HepG2 (cell line): ENCODE measurements at regions of chr16 and their contacts with region 1.

Region 1: DNA sequence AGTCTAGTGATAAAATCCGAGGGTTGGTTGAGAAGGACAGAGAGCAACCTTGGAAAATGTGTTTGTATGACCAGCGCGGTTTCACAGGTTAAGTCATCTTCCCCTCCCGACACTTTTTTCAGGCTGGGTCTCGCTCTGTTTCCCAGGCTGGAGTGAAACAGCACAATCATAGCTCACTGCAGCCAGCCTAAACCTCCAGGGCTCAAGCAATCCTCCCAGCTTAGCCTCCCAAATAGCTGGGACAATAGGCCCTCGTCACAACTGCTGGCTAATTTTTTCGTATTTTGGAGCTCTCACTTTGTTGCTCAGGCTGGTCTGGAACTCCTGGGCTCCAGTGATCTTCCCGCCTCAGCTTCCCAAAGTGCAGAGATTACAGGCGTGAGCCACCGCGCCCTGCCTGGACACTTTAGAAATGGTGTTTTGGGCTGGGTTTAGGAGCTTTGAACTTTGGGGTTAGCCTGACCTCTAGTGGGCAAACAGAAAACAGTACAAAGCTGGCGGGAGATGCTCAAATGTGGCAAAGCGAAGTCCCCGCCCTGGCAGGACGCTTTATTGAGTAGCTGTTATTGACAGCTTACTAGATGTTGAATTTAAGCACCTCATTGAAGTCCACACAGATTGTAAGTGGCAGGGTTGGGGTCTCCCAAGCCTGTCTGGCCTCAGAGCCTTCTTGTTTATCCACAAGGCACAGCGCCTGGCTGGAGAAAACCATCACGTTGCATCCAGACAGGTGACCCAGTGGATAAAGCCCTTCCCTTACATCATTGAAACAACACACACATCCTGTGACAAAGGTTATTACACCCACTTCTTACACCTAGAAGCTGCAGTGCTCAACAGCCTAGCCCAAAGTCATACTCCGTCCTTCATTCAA is 34.7 kb upstream of the RBBP6 start:
- DNase-seq: peak; percentile 67
- ATAC-seq: peak; percentile 96
- H3K4me3 ChIP-seq: no peak overlapping the region
- H3K27ac ChIP-seq: no peak overlapping the region
- H3K4me1 ChIP-seq: peaks cover 4% of the 10 kb centered on the region; the same call in 1 of the 2 replicates
- H3K27me3 ChIP-seq: peaks cover 0 to 11% of the 10 kb centered on the region in 2 experiments; a peak in 1 of 5 replicates
- CTCF ChIP-seq: peak; percentile 92
- EP300 ChIP-seq: no peak
- POLR2A ChIP-seq: no peak
- RAD21 ChIP-seq: peak; percentile 85

Region 2: GRCh38 chr16:23803591-23804123 is 701.1 kb before region 1 on chr16:
- CTCF ChIA-PET with region 1: interaction called, 3 read pairs
- POLR2A ChIA-PET with region 1: no interaction called
- in situ Hi-C with region 1: loop called (anchors 10 kb)
- intact Hi-C with region 1: loop called (anchors 5 kb)
- DNase-seq: peak; percentile 43
- ATAC-seq: peak; percentile 96
- H3K4me3 ChIP-seq: no peak overlapping the region
- H3K27ac ChIP-seq: no peak overlapping the region
- H3K4me1 ChIP-seq: no peaks in the 10 kb centered on the region
- H3K27me3 ChIP-seq: 0 out of 5 replicates have a peak, but pooled peaks cover 0 to 4% of the 10 kb centered on the region in 2 experiments
- CTCF ChIP-seq: peak; percentile 76
- EP300 ChIP-seq: no peak
- POLR2A ChIP-seq: no peak
- RAD21 ChIP-seq: peak; percentile 47

Region 3: DNA sequence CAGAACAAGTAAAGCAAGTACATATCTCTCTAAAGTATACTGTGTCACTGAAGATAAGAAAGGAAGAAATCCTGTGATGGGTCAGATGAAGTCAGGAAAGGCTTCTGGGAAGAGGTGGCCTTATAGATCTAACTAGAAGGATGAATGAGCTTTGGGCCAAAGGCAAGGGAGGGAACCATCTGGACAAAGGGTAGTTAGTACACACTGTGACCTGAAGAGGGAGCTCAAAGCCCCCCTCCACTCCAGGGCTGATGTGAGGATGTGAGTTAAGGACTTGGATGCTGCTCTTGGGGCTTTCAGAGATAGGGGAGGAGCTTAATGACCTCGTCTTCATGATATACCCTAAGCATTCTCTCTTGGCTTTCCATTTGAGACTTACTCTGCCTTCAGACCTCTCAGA is 433.9 kb before region 1 on chr16:
- CTCF ChIA-PET with region 1: interaction called, 5 read pairs
- POLR2A ChIA-PET with region 1: no interaction called
- in situ Hi-C with region 1: no loop called
- intact Hi-C with region 1: loop called (anchors 1 kb)
- DNase-seq: peak; percentile 29
- ATAC-seq: peak; percentile 86
- H3K4me3 ChIP-seq: no peak overlapping the region
- H3K27ac ChIP-seq: no peak overlapping the region
- H3K4me1 ChIP-seq: no peaks in the 10 kb centered on the region
- H3K27me3 ChIP-seq: no peaks in the 10 kb centered on the region; a peak in 1 of 5 replicates
- CTCF ChIP-seq: peak; percentile 77
- EP300 ChIP-seq: no peak
- POLR2A ChIP-seq: no peak
- RAD21 ChIP-seq: peak; percentile 29; the same call in 1 of the 2 replicates

Region 4: DNA sequence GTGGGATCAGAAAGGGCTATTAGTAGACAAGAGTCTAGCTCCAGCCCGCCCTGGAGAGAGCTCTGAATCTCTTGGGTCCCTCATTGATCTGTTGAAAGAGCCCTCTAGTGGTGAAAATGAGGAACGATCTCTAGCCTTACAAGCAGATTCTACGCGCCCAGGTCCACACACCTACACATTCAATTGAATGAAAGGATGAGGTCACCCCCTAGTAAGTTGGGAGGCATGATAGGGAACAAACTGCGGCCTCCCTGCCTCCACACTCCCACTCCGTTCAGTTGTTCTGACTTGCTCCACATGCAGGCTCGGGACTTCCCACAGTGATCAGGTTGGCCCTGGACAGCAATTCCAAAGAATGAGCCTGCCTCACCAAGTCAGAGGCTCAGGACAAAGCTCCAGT is 251.5 kb before region 1 on chr16:
- CTCF ChIA-PET with region 1: no interaction called
- POLR2A ChIA-PET with region 1: no interaction called
- in situ Hi-C with region 1: no loop called
- intact Hi-C with region 1: loop called (anchors 5 kb)
- DNase-seq: peak; percentile 47
- ATAC-seq: peak; percentile 93
- H3K4me3 ChIP-seq: no peak overlapping the region
- H3K27ac ChIP-seq: no peak overlapping the region
- H3K4me1 ChIP-seq: no peaks in the 10 kb centered on the region
- H3K27me3 ChIP-seq: peaks cover 0 to 4% of the 10 kb centered on the region in 2 experiments; a peak in 1 of 5 replicates
- CTCF ChIP-seq: peak; percentile 79
- EP300 ChIP-seq: no peak
- POLR2A ChIP-seq: no peak
- RAD21 ChIP-seq: peak; percentile 48; the same call in 1 of the 2 replicates

Region 5: GRCh38 chr16:24382762-24383407 is 121.8 kb before region 1 on chr16:
- CTCF ChIA-PET with region 1: no interaction called
- POLR2A ChIA-PET with region 1: no interaction called
- in situ Hi-C with region 1: no loop called
- intact Hi-C with region 1: no loop called
- DNase-seq: no peak
- ATAC-seq: no peak
- H3K4me3 ChIP-seq: no peak overlapping the region
- H3K27ac ChIP-seq: no peak overlapping the region
- H3K4me1 ChIP-seq: peaks cover 6% of the 10 kb centered on the region; the same call in 1 of the 2 replicates
- H3K27me3 ChIP-seq: no peaks in the 10 kb centered on the region
- CTCF ChIP-seq: no peak
- EP300 ChIP-seq: no peak
- POLR2A ChIP-seq: no peak
- RAD21 ChIP-seq: no peak